ENCODE measurements at regions of chr7 and their contacts with region 1.

Region 1: DNA sequence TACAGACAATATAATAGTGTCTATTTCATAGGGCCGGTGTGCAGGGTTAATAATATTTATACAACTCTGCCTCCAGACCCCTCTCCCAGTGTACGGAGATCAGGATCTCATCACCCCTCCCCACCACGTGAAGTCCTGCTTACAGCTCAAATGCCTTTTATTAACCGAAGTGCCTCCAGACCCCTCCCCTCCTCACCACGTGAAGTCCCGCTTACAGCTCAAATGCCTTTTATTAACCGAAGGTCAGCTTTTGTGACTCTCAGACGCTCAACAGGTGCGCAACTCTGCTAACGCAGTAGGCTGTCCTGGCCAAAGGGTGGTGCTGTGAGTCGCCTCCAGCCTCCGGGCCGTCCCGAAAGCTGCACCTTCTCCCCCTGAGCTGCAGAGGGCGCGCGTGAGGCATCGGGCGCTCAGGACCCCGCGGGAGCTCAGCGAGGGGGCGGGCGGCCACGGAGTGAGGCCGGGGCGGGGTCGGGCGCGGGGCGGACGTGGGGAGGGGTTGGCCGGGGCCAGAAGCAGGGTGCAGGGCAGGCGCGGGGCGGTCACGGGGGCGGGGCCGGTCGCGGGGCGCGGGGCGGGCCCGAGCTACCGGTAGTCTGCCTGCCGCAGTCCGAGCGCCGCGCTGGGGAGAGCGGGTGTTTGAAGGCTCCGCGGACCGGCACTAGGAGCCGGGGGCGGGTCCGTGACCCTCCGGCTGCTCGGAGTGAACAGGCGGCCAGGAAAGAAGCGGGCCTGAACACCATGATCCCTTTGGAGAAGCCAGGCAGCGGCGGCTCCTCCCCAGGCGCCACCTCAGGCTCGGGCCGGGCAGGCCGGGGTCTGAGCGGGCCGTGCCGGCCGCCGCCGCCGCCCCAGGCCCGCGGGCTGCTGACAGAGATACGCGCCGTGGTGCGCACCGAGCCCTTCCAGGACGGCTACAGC is at the start of gene STK17A:
- DNase-seq: peak; percentile 92
- ATAC-seq: peak; percentile 93
- H3K4me3 Mint-ChIP-seq: peak within 1 kb of the TSS; percentile 85
- H3K27ac Mint-ChIP-seq: no peak within 1 kb of the TSS
- H3K4me1 Mint-ChIP-seq: peaks cover 41% of the 10 kb centered on the region
- H3K27me3 Mint-ChIP-seq: peaks cover 8% of the 10 kb centered on the region
- CTCF ChIP-seq: peak; percentile 91
- total RNA-seq, gene STK17A: 12.2 to 17.6 TPM (median 15.1 TPM) in 3 replicates

Region 2: DNA sequence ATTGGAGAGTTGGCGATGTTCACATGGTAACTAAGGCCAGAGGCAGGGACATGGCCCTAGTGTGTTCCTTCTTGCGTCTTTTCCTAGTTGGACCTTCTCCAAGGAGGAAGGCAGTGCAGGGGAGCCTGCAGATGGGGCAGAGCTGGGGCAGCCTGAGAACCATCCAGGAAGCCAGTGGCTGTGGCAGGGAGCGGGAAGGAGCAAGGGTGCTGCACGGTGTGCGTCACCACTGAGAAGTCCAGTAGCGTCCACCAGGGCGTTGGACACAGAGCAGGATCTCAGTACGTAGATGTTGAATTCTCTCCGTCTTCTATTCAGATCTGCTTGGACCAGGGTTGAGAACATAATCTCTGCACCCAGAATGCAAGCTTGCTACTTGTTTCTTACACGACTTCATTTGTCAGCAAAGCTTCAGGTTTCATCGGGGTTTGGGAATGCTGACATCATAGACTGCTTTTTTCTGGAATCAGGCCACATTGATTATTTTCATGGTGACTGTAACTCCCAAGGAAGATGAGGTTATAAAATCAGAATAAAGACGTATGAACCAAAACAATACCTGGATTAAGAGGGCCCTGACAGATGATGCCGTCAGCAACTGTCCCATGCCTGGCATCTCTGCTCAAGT is 340.0 kb before region 1 on chr7:
- CTCF ChIA-PET with region 1: no interaction called
- POLR2A ChIA-PET with region 1: no interaction called
- DNase-seq: no peak
- ATAC-seq: no peak
- H3K4me3 Mint-ChIP-seq: no peak overlapping the region
- H3K27ac Mint-ChIP-seq: no peak overlapping the region
- H3K4me1 Mint-ChIP-seq: peaks cover 33% of the 10 kb centered on the region
- H3K27me3 Mint-ChIP-seq: no peaks in the 10 kb centered on the region
- CTCF ChIP-seq: no peak

Region 3: GRCh38 chr7:43516581-43517342 is 66.0 kb before region 1 on chr7:
- CTCF ChIA-PET with region 1: interaction called, 33 read pairs
- POLR2A ChIA-PET with region 1: no interaction called
- DNase-seq: no peak
- ATAC-seq: no peak
- H3K4me3 Mint-ChIP-seq: no peak overlapping the region
- H3K27ac Mint-ChIP-seq: no peak overlapping the region
- H3K4me1 Mint-ChIP-seq: peaks cover 32% of the 10 kb centered on the region
- H3K27me3 Mint-ChIP-seq: no peaks in the 10 kb centered on the region
- CTCF ChIP-seq: no peak

Region 4: DNA sequence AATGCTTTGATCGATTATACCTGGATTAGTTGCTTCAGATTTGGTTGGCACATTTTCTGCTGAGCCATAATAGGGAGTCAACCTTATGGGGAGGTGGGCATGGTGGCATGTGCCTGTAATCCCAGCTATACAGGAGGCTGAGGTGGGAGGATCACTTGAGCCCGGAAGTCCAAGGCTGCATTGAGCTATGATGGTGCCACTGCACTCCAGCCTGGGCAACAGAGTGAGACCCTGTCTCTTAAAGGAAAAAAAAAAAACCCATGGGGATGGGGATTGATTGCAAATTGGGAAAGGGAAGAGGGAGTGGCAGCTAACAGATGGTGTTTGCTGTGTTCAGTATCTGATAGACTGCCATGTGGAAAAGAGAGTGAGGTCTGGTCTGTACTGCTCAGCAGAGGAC is 11.3 kb after region 1 on chr7:
- CTCF ChIA-PET with region 1: interaction called, 13 read pairs
- POLR2A ChIA-PET with region 1: interaction called, 3 read pairs
- DNase-seq: no peak
- ATAC-seq: no peak
- H3K4me3 Mint-ChIP-seq: no peak overlapping the region
- H3K27ac Mint-ChIP-seq: no peak overlapping the region
- H3K4me1 Mint-ChIP-seq: peaks cover 7% of the 10 kb centered on the region
- H3K27me3 Mint-ChIP-seq: no peaks in the 10 kb centered on the region
- CTCF ChIP-seq: no peak

Region 5: DNA sequence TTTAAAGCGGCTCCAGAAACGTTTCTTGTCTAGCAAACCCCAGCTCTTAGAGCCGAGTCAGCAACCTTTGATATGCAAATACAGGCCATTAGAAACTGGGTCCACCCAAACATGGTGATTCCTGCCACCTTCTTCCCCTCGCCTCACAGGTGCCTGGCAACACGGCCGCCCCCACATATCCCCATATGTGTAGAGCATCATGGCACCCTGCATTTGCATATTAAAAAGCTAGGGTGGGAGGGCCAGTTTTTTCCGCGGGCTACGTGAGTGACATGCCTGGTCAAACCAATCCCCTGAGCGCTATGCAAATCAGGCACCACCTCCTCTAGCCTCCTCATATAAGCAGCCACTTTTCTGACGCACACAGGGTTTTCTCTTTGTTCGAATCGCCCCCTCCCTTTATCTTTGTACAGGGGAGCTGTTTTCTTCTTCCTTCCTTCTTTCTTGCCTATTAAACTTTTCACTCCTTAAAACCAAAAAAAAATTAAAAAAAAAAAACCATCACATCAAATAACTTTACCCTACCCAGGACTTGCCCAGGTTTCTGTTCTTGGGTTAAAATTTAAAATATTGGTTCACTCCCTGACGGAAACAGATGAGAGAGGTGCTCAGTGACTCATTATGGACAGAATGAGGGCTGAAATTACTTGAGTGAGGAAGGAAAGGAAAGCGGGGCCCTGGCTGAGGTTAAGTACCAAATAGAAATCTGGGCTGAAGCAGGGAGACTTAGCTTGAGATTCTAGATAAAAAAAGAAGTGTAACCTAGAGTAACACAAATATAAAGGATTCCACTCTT is 86.7 kb after region 1 on chr7:
- CTCF ChIA-PET with region 1: interaction called, 48 read pairs
- POLR2A ChIA-PET with region 1: interaction called, 7 read pairs
- DNase-seq: peak; percentile 85
- ATAC-seq: peak; percentile 98
- H3K4me3 Mint-ChIP-seq: peak overlapping the region; percentile 56
- H3K27ac Mint-ChIP-seq: peak overlapping the region; percentile 97
- H3K4me1 Mint-ChIP-seq: peaks cover 54% of the 10 kb centered on the region
- H3K27me3 Mint-ChIP-seq: no peaks in the 10 kb centered on the region
- CTCF ChIP-seq: no peak

Region 6: GRCh38 chr7:43729214-43729923 is 146.6 kb after region 1 on chr7 and contains the start of gene COA1:
- CTCF ChIA-PET with region 1: interaction called, 63 read pairs
- POLR2A ChIA-PET with region 1: interaction called, 7 read pairs
- DNase-seq: peak; percentile 74
- ATAC-seq: peak; percentile 97
- H3K4me3 Mint-ChIP-seq: peak within 1 kb of the TSS; percentile 96
- H3K27ac Mint-ChIP-seq: peak within 1 kb of the TSS; percentile 90
- H3K4me1 Mint-ChIP-seq: peaks cover 20% of the 10 kb centered on the region
- H3K27me3 Mint-ChIP-seq: no peaks in the 10 kb centered on the region
- CTCF ChIP-seq: no peak
- total RNA-seq, gene COA1: 132 to 148 TPM (median 146 TPM) in 3 replicates

Region 7: GRCh38 chr7:43824963-43825362 is 242.2 kb after region 1 on chr7:
- CTCF ChIA-PET with region 1: interaction called, 32 read pairs
- POLR2A ChIA-PET with region 1: interaction called, 3 read pairs
- DNase-seq: no peak
- ATAC-seq: no peak
- H3K4me3 Mint-ChIP-seq: no peak overlapping the region
- H3K27ac Mint-ChIP-seq: no peak overlapping the region
- H3K4me1 Mint-ChIP-seq: peaks cover 32% of the 10 kb centered on the region
- H3K27me3 Mint-ChIP-seq: peaks cover 31% of the 10 kb centered on the region
- CTCF ChIP-seq: no peak